Right cardiac atrium (tissue), 5 donors: ENCODE measurements at regions of chr1 and their contacts with region 1.

Region 1: DNA sequence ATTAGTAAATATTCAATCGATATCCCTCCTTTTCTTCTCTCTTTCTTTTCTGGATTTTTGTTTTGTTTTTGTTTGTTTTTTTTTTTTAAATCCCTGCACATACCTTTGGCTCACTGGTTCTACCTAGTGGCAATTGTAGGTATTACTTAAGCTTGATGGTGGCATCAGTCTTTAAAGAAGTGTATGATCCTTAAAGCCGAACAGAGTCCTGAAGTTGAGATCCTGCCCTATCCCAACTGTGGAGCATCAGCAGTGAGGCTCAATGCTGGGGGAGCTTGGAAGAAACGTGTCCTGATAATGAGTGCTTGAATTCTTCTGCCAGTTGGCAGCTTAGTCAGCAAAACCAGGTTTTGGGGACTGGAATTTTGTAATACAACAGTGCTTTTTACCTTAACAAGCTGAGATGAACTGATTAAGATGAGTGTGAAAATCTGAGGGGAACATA is 60.8 kb downstream of the FASLG start:
- DNase-seq: no peak
- ATAC-seq: peak in 1 of 2 donors; percentile 45
- H3K4me3 ChIP-seq: no peak overlapping the region
- H3K27ac ChIP-seq: no peak overlapping the region
- H3K4me1 ChIP-seq: no peaks in the 10 kb centered on the region
- H3K27me3 ChIP-seq: no peaks in the 10 kb centered on the region

Region 2: GRCh38 chr1:172443626-172444453 is 275.9 kb before region 1 on chr1 and contains the start of gene PIGC:
- intact Hi-C with region 1: loop called in 1 of 4 experiments (anchors 10 kb)
- DNase-seq: peak; percentile 90 to 97 (median 96)
- ATAC-seq: peak; percentile 98 to 99
- H3K4me3 ChIP-seq: peak within 1 kb of the TSS; percentile 98
- H3K27ac ChIP-seq: peak within 1 kb of the TSS; percentile 70
- H3K4me1 ChIP-seq: peaks cover 4% of the 10 kb centered on the region
- H3K27me3 ChIP-seq: no peaks in the 10 kb centered on the region
- total RNA-seq, gene PIGC: 15.0 to 19.1 (median 18.5) TPM

Region 3: GRCh38 chr1:172449585-172450534 is 269.9 kb before region 1 on chr1:
- intact Hi-C with region 1: loop called in 3 of 4 experiments (anchors 10 kb)
- DNase-seq: peak; percentile 58 to 78 (median 71)
- ATAC-seq: peak; percentile 88
- H3K4me3 ChIP-seq: peak overlapping the region; percentile 16
- H3K27ac ChIP-seq: peak overlapping the region; percentile 21
- H3K4me1 ChIP-seq: peaks cover 3% of the 10 kb centered on the region
- H3K27me3 ChIP-seq: no peaks in the 10 kb centered on the region

Region 4: DNA sequence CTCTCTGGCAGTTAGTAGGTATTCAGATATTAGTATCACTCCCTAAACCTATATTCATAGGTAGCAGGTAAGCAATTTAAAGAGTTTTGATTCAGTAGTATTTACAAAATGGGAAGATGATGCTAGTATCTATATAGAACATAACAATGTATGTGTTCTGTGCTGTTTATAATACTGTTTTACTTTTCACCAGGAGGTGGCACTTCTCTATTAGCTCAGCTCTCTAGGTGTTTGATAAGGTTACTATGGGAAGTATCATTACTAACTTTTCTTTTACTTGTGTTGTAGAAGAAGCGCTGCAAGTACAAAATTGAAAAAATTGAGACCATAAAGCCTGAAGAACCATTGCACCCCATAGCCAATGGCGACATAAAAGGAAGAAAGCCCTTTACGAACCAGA is 110.2 kb before region 1 on chr1:
- intact Hi-C with region 1: loop called (anchors 5 to 10 kb)
- DNase-seq: no peak
- ATAC-seq: no peak
- H3K4me3 ChIP-seq: no peak overlapping the region
- H3K27ac ChIP-seq: no peak overlapping the region
- H3K4me1 ChIP-seq: no peaks in the 10 kb centered on the region
- H3K27me3 ChIP-seq: no peaks in the 10 kb centered on the region

Region 5: GRCh38 chr1:172775616-172776015 is 55.9 kb after region 1 on chr1:
- intact Hi-C with region 1: no loop called
- DNase-seq: peak in 1 of 3 donors; percentile 43
- ATAC-seq: peak; percentile 11 to 50
- H3K4me3 ChIP-seq: no peak overlapping the region
- H3K27ac ChIP-seq: no peak overlapping the region
- H3K4me1 ChIP-seq: no peaks in the 10 kb centered on the region
- H3K27me3 ChIP-seq: no peaks in the 10 kb centered on the region